Activated T-helper 2 cell treated with anti-CD3 and anti-CD28 coated beads, Interferon-gamma antibody, Interleukin-2, Interleukin-4, amounts not matched to agents 10 μg/mL and 5 μg/mL and 100 μg/mL, durations not matched to agents 14 hours and 24 hours and 36 hours (primary cell): ENCODE measurements at regions of chr1 and their contacts with region 1.

Region 1: DNA sequence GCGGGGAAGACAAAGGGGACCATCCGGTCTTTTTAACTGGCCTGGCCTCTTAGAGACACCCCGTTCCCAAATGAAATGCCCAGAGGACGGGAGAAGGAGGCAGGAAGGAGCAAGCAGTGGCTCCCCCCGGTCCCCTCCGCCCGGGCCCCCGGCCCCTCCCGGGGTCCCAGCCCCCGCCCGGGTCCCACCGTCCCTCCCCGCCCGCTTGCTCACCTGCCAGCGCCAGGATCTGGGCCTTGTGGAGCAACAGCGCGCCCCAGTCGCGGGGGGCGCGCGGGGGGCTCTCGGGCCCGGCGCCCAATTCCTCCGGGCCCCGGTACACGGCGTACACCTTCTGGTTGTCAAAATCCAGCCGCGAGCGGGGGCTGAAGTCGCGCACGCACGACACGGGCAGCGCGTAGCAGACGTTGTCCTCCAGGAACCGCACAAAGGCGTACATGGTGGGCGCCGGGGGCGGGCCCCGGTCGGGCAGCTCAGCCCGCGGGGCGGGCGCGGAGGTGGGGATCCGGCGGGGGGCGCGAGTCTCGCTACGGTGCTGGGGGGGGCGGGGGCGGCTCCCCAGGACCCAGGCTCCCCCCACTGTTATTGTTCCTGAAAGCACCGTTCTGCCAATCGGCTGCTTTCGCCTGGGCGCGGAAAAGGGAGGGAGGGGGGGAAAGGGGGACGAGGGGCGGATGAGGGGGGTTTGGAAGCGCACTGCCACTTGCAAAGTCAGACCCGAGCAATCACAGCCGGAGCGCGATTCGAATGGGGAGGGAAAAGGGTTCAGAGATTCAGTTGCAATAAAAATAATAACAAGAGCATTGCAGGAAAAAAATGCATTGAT is at the start of gene BEND5:
- DNase-seq: peak; percentile 25
- H3K4me3 Mint-ChIP-seq: peak within 1 kb of the TSS; percentile 90
- H3K27ac Mint-ChIP-seq: peak within 1 kb of the TSS; percentile 78
- H3K4me1 Mint-ChIP-seq: peaks cover 35% of the 10 kb centered on the region
- H3K27me3 Mint-ChIP-seq: peaks cover 25% of the 10 kb centered on the region
- total RNA-seq, gene BEND5: 10.2 and 13.1 TPM in 2 replicates

Region 2: GRCh38 chr1:48761986-48762385 is 14.6 kb before region 1 on chr1:
- intact Hi-C with region 1: loop called (anchors 2 kb)
- DNase-seq: no peak
- H3K4me3 Mint-ChIP-seq: no peak overlapping the region
- H3K27ac Mint-ChIP-seq: no peak overlapping the region
- H3K4me1 Mint-ChIP-seq: peaks cover 23% of the 10 kb centered on the region
- H3K27me3 Mint-ChIP-seq: no peaks in the 10 kb centered on the region

Region 3: GRCh38 chr1:48793863-48794262 is 17.3 kb after region 1 on chr1:
- intact Hi-C with region 1: loop called (anchors 2 kb)
- DNase-seq: no peak
- H3K4me3 Mint-ChIP-seq: no peak overlapping the region
- H3K27ac Mint-ChIP-seq: no peak overlapping the region
- H3K4me1 Mint-ChIP-seq: peaks cover 30% of the 10 kb centered on the region
- H3K27me3 Mint-ChIP-seq: peaks cover 10% of the 10 kb centered on the region

Region 4: GRCh38 chr1:48823168-48823567 is 46.6 kb after region 1 on chr1:
- intact Hi-C with region 1: no loop called
- DNase-seq: no peak
- H3K4me3 Mint-ChIP-seq: no peak overlapping the region
- H3K27ac Mint-ChIP-seq: no peak overlapping the region
- H3K4me1 Mint-ChIP-seq: no peaks in the 10 kb centered on the region
- H3K27me3 Mint-ChIP-seq: peaks cover 18% of the 10 kb centered on the region